Heart right ventricle (tissue), 16 donors: ENCODE measurements at regions of chr5 and their contacts with region 1.

Region 1: GRCh38 chr5:17189381-17190036 is 27.9 kb upstream of the BASP1 start:
- DNase-seq: peak; percentile 70 to 75
- ATAC-seq: peak; percentile 51 to 86 (median 68)
- H3K4me3 ChIP-seq: no peak overlapping the region
- H3K27ac ChIP-seq: no peak overlapping the region
- H3K4me1 ChIP-seq: peaks cover 7 to 25% (median 13%) of the 10 kb centered on the region in 9 donors
- H3K27me3 ChIP-seq: peaks cover 0 to 4% (median 0%) of the 10 kb centered on the region in 7 donors
- CTCF ChIP-seq: peak; percentile 70 to 89 (median 84)

Region 2: DNA sequence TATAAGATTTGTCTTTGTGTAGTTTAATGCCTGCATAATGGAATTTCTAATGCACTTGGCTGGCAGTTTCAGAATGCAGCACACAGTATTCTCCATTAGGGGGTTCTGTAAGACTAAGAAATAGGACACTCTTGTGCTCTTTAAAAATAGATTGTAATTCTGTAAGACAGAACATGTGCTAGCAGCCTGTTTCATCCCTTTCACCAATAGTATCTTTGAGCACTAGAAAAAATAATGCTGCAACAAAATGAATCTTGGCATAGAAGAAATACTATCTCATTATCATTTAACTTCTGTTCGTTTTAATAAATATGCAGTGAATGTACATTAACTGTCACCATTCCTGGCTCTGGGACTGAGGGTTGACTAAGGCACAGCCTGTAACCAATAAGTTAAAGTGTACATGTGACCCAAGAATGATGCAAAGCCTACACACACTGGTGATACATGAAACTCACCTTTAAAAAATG is 700.2 kb before region 1 on chr5:
- intact Hi-C with region 1: loop called in 1 of 10 experiments (anchors 10 kb)
- DNase-seq: no peak
- ATAC-seq: peak; percentile 62 to 83 (median 70)
- H3K4me3 ChIP-seq: no peak overlapping the region
- H3K27ac ChIP-seq: peak overlapping the region in 7 of 10 donors; percentile 67 to 89 (median 79)
- H3K4me1 ChIP-seq: peaks cover 0 to 67% (median 25%) of the 10 kb centered on the region in 9 donors
- H3K27me3 ChIP-seq: no peaks in the 10 kb centered on the region
- CTCF ChIP-seq: peak; percentile 21 to 79 (median 66)

Region 3: GRCh38 chr5:16690243-16690852 is 499.2 kb before region 1 on chr5:
- intact Hi-C with region 1: loop called in 3 of 10 experiments (anchors 10 kb)
- DNase-seq: peak in 1 of 2 donors; percentile 29
- ATAC-seq: peak in 6 of 8 donors; percentile 37 to 63 (median 44)
- H3K4me3 ChIP-seq: no peak overlapping the region
- H3K27ac ChIP-seq: no peak overlapping the region
- H3K4me1 ChIP-seq: no peaks in the 10 kb centered on the region
- H3K27me3 ChIP-seq: no peaks in the 10 kb centered on the region
- CTCF ChIP-seq: peak in 8 of 9 donors; percentile 10 to 65 (median 56)

Region 4: GRCh38 chr5:16791036-16791705 is 398.3 kb before region 1 on chr5:
- intact Hi-C with region 1: loop called (anchors 1 to 5 kb)
- DNase-seq: peak in 1 of 2 donors; percentile 17
- ATAC-seq: peak in 2 of 8 donors; percentile 17 to 59
- H3K4me3 ChIP-seq: no peak overlapping the region
- H3K27ac ChIP-seq: no peak overlapping the region
- H3K4me1 ChIP-seq: peaks cover 0 to 9% (median 0%) of the 10 kb centered on the region in 9 donors
- H3K27me3 ChIP-seq: no peaks in the 10 kb centered on the region
- CTCF ChIP-seq: peak; percentile 67 to 84 (median 77)

Region 5: DNA sequence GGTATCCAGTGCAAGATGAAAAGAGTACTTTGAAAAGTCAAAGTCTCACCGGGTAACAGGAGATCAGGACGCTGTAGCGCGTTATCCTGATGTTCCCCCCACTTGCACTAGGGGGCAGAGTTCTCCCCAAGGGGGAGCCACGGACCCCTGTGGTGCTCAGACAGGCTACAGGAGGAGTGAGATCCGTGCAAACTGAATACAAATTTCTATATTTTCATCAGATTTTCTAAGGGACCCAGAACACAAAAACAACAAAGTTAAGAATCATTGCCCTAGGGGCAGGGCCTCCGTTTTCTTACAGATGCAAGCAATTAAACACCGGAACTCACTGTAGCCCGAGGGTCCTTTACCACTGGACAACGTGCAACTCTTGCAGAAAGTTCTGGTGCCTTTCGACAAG is 255.4 kb before region 1 on chr5:
- intact Hi-C with region 1: loop called in 9 of 10 experiments (anchors 2 to 10 kb)
- DNase-seq: peak; percentile 52 to 61
- ATAC-seq: peak in 5 of 8 donors; percentile 30 to 77 (median 75)
- H3K4me3 ChIP-seq: peak overlapping the region in 9 of 10 donors; percentile 65 to 87 (median 74)
- H3K27ac ChIP-seq: peak overlapping the region in 1 of 10 donors; percentile 77
- H3K4me1 ChIP-seq: peaks cover 0 to 55% (median 18%) of the 10 kb centered on the region in 9 donors
- H3K27me3 ChIP-seq: peaks cover 0 to 69% (median 49%) of the 10 kb centered on the region in 7 donors
- CTCF ChIP-seq: peak; percentile 61 to 86 (median 80)